H1 (cell line): ENCODE measurements at regions of chr20 and their contacts with region 1.

Region 1: GRCh38 chr20:35994994-35995453 is 26.6 kb downstream of the CNBD2 start:
- DNase-seq: peak; percentile 82 to 89
- H3K4me3 ChIP-seq: no peak overlapping the region
- H3K27ac ChIP-seq: no peak overlapping the region
- H3K4me1 ChIP-seq: no peaks in the 10 kb centered on the region; a peak in 1 of 7 replicates
- H3K27me3 ChIP-seq: no peaks in the 10 kb centered on the region
- CTCF ChIP-seq: peak; percentile 88 to 92 (median 92)
- EP300 ChIP-seq: no peak
- POLR2A ChIP-seq: no peak
- RAD21 ChIP-seq: peak; percentile 90 to 94

Region 2: GRCh38 chr20:35963878-35964277 is 31.1 kb before region 1 on chr20:
- CTCF ChIA-PET with region 1: interaction called, 13 read pairs
- POLR2A ChIA-PET with region 1: no interaction called
- DNase-seq: no peak
- H3K4me3 ChIP-seq: no peak overlapping the region
- H3K27ac ChIP-seq: no peak overlapping the region
- H3K4me1 ChIP-seq: peaks cover 0 to 2% (median 0%) of the 10 kb centered on the region in 4 experiments; a peak in 2 of 7 replicates
- H3K27me3 ChIP-seq: no peaks in the 10 kb centered on the region; a peak in 1 of 7 replicates
- CTCF ChIP-seq: no peak
- EP300 ChIP-seq: no peak
- POLR2A ChIP-seq: no peak
- RAD21 ChIP-seq: no peak

Region 3: GRCh38 chr20:35978041-35978513 is 16.9 kb before region 1 on chr20:
- CTCF ChIA-PET with region 1: interaction called, 138 read pairs
- POLR2A ChIA-PET with region 1: interaction called, 3 read pairs
- DNase-seq: no peak
- H3K4me3 ChIP-seq: no peak overlapping the region
- H3K27ac ChIP-seq: no peak overlapping the region
- H3K4me1 ChIP-seq: no peaks in the 10 kb centered on the region; a peak in 1 of 7 replicates
- H3K27me3 ChIP-seq: no peaks in the 10 kb centered on the region; a peak in 1 of 7 replicates
- CTCF ChIP-seq: no peak
- EP300 ChIP-seq: no peak
- POLR2A ChIP-seq: no peak
- RAD21 ChIP-seq: no peak

Region 4: GRCh38 chr20:36017034-36017951 is 22.3 kb after region 1 on chr20:
- CTCF ChIA-PET with region 1: interaction called, 22 read pairs
- POLR2A ChIA-PET with region 1: no interaction called
- DNase-seq: no peak
- H3K4me3 ChIP-seq: no peak overlapping the region
- H3K27ac ChIP-seq: no peak overlapping the region
- H3K4me1 ChIP-seq: peaks cover 0 to 9% (median 4%) of the 10 kb centered on the region in 4 experiments; a peak in 5 of 7 replicates
- H3K27me3 ChIP-seq: no peaks in the 10 kb centered on the region
- CTCF ChIP-seq: no peak
- EP300 ChIP-seq: no peak
- POLR2A ChIP-seq: no peak
- RAD21 ChIP-seq: no peak

Region 5: DNA sequence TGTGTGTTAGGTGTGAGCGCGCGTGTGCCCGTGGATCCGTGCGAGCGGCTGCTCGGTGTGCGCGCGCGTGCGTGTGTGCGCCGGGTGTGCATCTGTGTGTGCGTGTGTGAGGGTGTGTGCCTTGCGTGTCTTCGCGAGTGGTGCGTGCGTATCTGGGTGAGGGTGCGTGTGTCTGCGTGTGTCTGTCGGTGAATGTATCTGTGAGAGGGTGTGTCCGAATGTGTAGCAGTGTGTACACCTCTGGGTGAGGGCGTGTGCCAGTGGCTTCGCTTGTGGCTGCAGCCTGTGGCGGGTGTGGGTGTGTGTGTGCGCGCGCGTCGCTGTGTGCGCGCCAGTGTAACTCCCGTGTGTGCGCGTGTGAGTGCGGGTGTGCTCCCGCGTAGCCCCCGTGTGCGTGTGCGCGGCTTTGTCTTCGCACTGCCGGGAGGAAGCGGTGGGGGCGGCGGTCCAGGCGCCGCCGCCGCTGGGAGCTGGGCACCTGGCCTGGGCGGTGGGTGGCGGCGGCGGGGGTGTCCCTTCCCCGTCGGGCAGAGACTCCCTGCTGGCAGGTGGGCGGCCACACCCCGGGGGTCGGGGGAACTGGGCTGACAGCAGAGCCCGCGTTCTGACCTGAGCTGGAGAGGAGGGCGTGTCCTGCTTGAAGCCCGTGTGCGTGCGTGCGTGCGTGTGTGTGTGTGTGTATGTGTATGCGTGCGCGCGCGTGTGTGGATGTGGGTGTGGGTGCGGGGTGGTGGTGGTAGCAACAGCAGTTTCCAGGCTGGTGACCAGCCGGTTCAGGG is 98.2 kb after region 1 on chr20:
- CTCF ChIA-PET with region 1: interaction called, 18 read pairs
- POLR2A ChIA-PET with region 1: no interaction called
- DNase-seq: no peak
- H3K4me3 ChIP-seq: peak overlapping the region; percentile 27 to 65 (median 50)
- H3K27ac ChIP-seq: no peak overlapping the region
- H3K4me1 ChIP-seq: peaks cover 15 to 30% (median 17%) of the 10 kb centered on the region in 4 experiments
- H3K27me3 ChIP-seq: peaks cover 31 to 59% (median 54%) of the 10 kb centered on the region in 4 experiments
- CTCF ChIP-seq: no peak
- EP300 ChIP-seq: no peak
- POLR2A ChIP-seq: no peak
- RAD21 ChIP-seq: no peak

Region 6: GRCh38 chr20:36128463-36129159 is 133.6 kb after region 1 on chr20:
- CTCF ChIA-PET with region 1: interaction called, 244 read pairs
- POLR2A ChIA-PET with region 1: no interaction called
- DNase-seq: no peak
- H3K4me3 ChIP-seq: no peak overlapping the region
- H3K27ac ChIP-seq: no peak overlapping the region
- H3K4me1 ChIP-seq: peaks cover 0 to 3% (median 1%) of the 10 kb centered on the region in 4 experiments; a peak in 3 of 7 replicates
- H3K27me3 ChIP-seq: no peaks in the 10 kb centered on the region
- CTCF ChIP-seq: no peak
- EP300 ChIP-seq: no peak
- POLR2A ChIP-seq: no peak
- RAD21 ChIP-seq: no peak

Region 7: DNA sequence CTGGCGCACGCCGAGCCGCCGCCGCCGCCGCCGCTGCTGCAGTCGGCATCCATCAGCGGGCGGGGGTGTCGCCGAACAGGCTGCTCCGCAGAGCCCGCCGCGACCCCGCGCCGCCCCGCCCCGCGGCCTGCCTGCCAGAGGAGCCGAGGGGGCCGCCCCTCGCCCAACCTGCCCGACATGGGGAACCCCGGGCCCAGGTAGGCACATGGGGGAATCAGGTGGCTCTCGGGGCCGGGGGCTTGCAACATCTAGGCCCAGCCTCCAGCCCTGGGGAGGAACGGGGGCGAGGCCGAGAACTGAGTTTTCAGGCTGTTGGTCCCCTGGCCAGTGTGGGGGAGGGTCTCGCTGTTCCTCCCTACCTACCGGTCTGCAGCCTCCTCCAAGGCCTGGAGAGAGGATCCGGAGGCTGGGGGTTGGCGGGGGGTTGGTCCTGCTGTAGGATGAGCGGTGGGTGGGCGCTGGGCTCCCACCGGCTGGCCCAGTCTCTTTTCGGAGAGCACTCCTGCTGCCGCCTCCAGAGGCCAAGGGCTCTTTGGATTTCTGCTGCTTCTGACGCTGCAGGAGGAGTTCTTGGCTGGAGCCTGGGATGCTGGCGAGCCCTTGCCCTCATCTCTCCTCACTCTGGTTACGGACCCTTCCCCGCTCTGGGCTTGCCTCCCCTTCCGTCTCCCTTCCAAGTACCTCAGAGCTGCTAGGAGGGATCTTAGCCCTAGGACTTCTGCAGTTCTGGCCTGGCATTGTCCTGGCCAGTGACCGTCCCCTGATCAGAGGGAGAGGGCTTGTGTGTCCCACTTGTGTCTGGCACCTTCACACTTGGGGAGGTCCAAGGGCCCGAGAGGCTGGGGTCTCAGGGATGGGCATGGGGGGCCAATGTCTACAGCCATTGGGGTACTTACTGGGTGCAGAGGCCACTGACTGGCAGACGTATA is 159.9 kb after region 1 on chr20 and contains the start of gene EPB41L1:
- CTCF ChIA-PET with region 1: interaction called, 89 read pairs
- POLR2A ChIA-PET with region 1: no interaction called
- DNase-seq: peak in 1 of 2 experiments; percentile 79
- H3K4me3 ChIP-seq: peak within 1 kb of the TSS; percentile 50 to 91 (median 57)
- H3K27ac ChIP-seq: no peak within 1 kb of the TSS
- H3K4me1 ChIP-seq: peaks cover 3 to 15% (median 9%) of the 10 kb centered on the region in 4 experiments
- H3K27me3 ChIP-seq: peaks cover 0 to 4% (median under 1%) of the 10 kb centered on the region in 4 experiments; a peak in 3 of 7 replicates
- CTCF ChIP-seq: no peak
- EP300 ChIP-seq: no peak
- POLR2A ChIP-seq: no peak
- RAD21 ChIP-seq: no peak
- total RNA-seq, gene EPB41L1: 36.0 and 42.0 TPM in 2 replicates